ENCODE measurements at regions of chr10 and their contacts with region 1.

Region 1: GRCh38 chr10:30687698-30688219 is 58.2 kb upstream of the LYZL2 start:
- DNase-seq: peak; percentile 84
- ATAC-seq: peak; percentile 86
- H3K4me3 Mint-ChIP-seq: no peak overlapping the region
- H3K27ac Mint-ChIP-seq: no peak overlapping the region
- H3K4me1 Mint-ChIP-seq: peaks cover 29% of the 10 kb centered on the region
- H3K27me3 Mint-ChIP-seq: peaks cover 16% of the 10 kb centered on the region

Region 2: GRCh38 chr10:30606313-30606712 is 81.4 kb before region 1 on chr10:
- CTCF ChIA-PET with region 1: no interaction called
- POLR2A ChIA-PET with region 1: no interaction called
- DNase-seq: peak; percentile 9
- ATAC-seq: no peak
- H3K4me3 Mint-ChIP-seq: no peak overlapping the region
- H3K27ac Mint-ChIP-seq: no peak overlapping the region
- H3K4me1 Mint-ChIP-seq: no peaks in the 10 kb centered on the region
- H3K27me3 Mint-ChIP-seq: peaks cover 25% of the 10 kb centered on the region

Region 3: DNA sequence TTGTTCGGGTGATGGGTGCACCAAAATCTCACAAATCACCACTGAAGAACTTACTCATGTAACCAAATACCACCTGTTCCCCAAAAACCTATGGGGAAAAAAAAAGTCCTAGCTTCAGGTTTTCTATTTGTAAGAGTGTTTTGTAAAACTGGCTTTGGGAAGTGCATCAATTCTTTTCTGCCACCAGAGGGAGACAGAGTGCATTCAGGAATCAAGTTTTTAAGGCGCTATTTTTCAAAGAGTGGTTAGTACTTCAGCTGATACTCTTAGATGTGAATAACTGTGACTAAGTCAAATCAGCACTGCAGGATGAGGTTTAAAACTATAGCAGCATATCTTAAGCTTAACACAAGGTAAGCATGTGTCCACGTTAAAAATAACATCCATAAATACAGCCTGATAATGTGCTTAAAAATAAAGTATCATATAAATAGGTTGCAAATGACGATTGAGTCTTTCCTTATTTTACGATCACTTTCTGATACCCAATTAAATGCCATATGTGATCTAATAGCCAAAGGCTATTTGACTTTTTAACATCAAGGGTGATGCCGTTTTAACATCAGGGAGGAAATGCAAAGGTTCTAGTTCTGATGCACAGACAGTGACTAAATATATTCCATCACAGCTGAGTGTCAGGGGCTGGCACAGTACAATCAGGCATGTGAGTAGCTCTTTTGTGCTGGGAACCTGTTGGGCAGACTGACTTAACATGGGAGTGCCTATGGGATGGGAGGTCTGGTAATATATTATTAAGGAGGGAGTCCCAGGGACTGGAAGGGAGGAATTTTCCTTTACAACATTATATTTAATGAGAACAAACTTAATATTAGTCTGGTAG is 47.6 kb before region 1 on chr10:
- CTCF ChIA-PET with region 1: interaction called, 15 read pairs
- POLR2A ChIA-PET with region 1: no interaction called
- DNase-seq: no peak
- ATAC-seq: no peak
- H3K4me3 Mint-ChIP-seq: no peak overlapping the region
- H3K27ac Mint-ChIP-seq: no peak overlapping the region
- H3K4me1 Mint-ChIP-seq: no peaks in the 10 kb centered on the region
- H3K27me3 Mint-ChIP-seq: peaks cover 43% of the 10 kb centered on the region

Region 4: DNA sequence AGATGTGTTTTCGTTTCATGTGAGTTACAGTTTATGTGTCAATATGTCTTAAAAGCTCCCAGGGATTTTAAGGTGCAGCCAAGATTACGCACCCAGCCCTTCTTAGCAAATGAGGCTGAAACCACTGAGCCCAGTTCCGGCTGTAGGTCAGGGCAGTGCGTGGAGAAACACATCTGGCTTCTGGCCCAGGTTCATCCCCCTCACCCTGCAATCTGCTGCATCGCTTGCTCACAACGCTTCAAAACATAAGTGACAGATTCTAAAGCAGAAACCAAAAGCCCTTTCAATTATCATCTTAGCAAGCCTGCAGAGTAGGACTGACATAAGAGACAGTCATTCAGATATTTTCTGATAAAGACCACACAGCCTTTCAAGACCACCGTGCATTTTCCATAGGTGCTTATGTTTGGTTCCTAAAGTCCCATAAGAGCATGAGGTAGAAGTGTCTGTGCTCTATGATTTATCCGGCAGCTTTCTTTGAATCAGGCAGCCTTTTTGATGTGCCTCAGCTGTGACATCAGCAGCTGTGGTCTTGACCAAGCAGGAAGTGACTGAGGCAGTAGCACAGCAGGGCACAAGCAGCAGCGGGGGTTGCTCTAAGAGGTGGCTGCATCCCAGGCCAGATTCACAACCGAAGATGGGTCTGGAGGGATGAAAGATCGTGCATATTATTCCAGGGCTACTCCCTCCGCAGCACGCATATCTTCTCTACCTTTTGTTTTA is 13.9 kb after region 1 on chr10:
- CTCF ChIA-PET with region 1: interaction called, 97 read pairs
- POLR2A ChIA-PET with region 1: interaction called, 9 read pairs
- DNase-seq: peak; percentile 82
- ATAC-seq: peak; percentile 76
- H3K4me3 Mint-ChIP-seq: peak overlapping the region; percentile 89
- H3K27ac Mint-ChIP-seq: peak overlapping the region; percentile 99
- H3K4me1 Mint-ChIP-seq: peaks cover 93% of the 10 kb centered on the region
- H3K27me3 Mint-ChIP-seq: no peaks in the 10 kb centered on the region

Region 5: DNA sequence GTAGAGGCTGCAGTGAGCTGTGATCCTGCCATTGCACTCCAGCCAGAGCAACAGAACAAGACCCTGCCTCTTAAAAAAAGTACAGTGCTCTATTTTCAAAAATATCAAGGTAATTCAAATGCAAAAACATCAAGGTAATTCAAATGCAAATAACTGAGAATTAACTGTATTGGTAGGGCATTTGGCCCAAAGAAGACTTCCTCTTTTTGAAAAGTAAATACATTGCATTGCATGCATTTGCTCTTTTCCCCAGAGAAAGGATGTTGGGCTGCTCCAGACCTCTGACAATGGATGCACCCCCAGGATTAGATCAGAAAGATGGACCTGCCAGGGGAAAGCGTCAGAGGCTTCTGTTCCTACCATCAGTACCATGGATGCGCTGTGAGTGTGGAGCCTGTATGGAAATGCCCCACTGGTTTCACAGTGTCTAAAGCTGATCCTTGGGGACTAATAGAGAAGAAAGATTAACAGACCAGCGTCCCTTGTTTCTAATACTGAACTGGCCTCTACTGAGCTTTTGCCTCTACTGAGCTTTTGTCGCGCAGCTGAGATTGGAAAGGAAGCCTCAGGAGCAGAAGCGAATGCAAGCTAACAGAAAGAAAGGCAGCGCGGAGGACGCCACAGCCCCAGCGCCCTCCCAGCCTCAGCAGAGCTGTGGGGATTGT is 35.3 kb after region 1 on chr10:
- CTCF ChIA-PET with region 1: interaction called, 106 read pairs
- POLR2A ChIA-PET with region 1: no interaction called
- DNase-seq: no peak
- ATAC-seq: no peak
- H3K4me3 Mint-ChIP-seq: no peak overlapping the region
- H3K27ac Mint-ChIP-seq: no peak overlapping the region
- H3K4me1 Mint-ChIP-seq: peaks cover 8% of the 10 kb centered on the region
- H3K27me3 Mint-ChIP-seq: peaks cover 9% of the 10 kb centered on the region

Region 6: GRCh38 chr10:30751678-30752331 is 64.0 kb after region 1 on chr10:
- CTCF ChIA-PET with region 1: interaction called, 11 read pairs
- POLR2A ChIA-PET with region 1: no interaction called
- DNase-seq: no peak
- ATAC-seq: no peak
- H3K4me3 Mint-ChIP-seq: no peak overlapping the region
- H3K27ac Mint-ChIP-seq: peak overlapping the region; percentile 58
- H3K4me1 Mint-ChIP-seq: peaks cover 36% of the 10 kb centered on the region
- H3K27me3 Mint-ChIP-seq: no peaks in the 10 kb centered on the region